OCI-LY7 (cell line): ENCODE measurements at regions of chr1 and their contacts with region 1.

Region 1: GRCh38 chr1:226679853-226680516 is 59.1 kb downstream of the ITPKB start:
- DNase-seq: peak; percentile 84
- H3K4me3 ChIP-seq: peak overlapping the region; percentile 47
- H3K27ac ChIP-seq: peak overlapping the region; percentile 98
- H3K4me1 ChIP-seq: peaks cover 99% of the 10 kb centered on the region
- CTCF ChIP-seq: no peak

Region 2: DNA sequence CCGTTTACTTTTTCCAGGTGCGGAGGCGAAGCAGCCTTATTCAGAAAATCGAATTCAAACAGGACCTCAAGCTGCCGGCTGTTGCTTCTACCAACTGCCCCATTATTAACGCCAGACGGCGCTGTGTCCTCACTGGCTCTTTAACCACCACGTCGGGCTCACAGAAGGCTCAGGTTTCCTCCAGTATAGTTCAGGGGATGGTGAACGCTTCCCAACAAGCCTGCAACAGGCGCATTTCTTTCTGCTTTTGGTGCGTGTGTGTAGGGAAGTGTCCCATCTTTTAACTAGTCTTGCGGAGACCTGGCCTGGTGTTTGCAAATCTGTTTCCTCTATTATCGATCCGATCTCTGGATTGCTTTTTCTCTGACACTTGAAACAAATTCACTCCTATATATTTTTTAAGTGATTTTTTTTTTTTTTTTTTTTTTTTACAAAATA is 132.2 kb before region 1 on chr1:
- CTCF ChIA-PET with region 1: no interaction called
- POLR2A ChIA-PET with region 1: no interaction called
- intact Hi-C with region 1: no loop called
- DNase-seq: peak; percentile 86
- H3K4me3 ChIP-seq: no peak overlapping the region
- H3K27ac ChIP-seq: no peak overlapping the region
- H3K4me1 ChIP-seq: peaks cover 20% of the 10 kb centered on the region
- CTCF ChIP-seq: peak; percentile 96

Region 3: GRCh38 chr1:226662642-226663326 is 17.2 kb before region 1 on chr1:
- CTCF ChIA-PET with region 1: interaction called, 23 read pairs
- POLR2A ChIA-PET with region 1: interaction called, 125 read pairs
- intact Hi-C with region 1: no loop called
- DNase-seq: peak; percentile 98
- H3K4me3 ChIP-seq: peak overlapping the region; percentile 55
- H3K27ac ChIP-seq: no peak overlapping the region
- H3K4me1 ChIP-seq: peaks cover 48% of the 10 kb centered on the region
- CTCF ChIP-seq: no peak